ENCODE measurements at regions of chr2 and their contacts with region 1.

Region 1: DNA sequence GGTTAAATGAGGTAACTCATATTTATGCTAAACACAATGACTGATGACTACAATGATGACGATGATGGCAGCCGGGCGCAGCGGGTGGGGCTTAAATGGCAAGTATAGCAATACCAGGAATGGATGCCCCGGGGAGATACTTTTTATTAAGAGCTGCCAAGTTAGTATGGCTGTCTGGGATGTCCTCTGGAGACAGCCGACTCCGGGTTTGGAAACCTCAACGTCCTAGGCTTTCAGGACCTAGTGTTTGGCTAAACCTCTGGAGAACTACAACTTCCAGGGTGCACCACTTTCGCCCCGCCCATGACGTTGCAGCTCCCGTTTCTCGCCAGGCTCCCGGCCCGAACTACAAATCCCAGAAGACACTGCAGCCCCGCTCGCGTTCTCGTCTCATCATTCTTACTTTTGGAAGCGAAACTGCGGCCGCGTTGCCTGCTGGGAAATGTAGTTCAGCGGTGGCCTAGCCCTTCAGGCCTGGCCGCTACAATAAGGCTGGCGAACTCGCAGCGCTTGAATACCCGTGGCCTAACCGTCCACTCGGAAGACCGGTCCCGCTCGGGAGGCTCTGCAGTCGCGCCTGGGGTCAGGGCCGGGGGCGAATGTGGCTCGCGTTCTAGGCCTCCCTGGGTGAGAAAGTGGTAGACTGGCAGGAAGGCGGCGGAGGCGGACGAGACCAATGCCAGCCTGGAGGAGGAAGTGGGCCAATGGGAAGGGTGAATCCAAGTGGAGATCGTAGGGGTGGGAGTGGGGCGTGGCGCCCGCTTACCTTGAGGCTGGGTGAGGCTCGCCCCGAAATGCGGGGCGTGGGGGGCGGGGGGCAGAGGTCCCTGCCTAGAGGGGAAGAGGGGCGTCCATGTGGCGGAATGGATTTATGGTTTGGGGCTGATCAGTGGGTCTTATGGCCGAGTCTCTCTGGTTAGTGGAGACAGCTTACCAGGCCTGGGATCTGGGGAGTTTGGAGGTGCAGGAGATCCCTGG is at the start of gene SMARCAL1:
- DNase-seq: peak; percentile 92
- ATAC-seq: peak; percentile 92
- H3K4me3 ChIP-seq: peak within 1 kb of the TSS; percentile 82
- H3K27ac ChIP-seq: peak within 1 kb of the TSS; percentile 97
- H3K4me1 ChIP-seq: peaks cover 10% of the 10 kb centered on the region
- H3K27me3 ChIP-seq: no peaks in the 10 kb centered on the region
- CTCF ChIP-seq: no peak
- EP300 ChIP-seq: no peak
- POLR2A ChIP-seq: peak; percentile 89
- RAD21 ChIP-seq: no peak
- polyA plus RNA-seq, gene SMARCAL1: 10.8 to 11.4 TPM

Region 2: GRCh38 chr2:216163518-216163917 is 248.8 kb before region 1 on chr2:
- CTCF ChIA-PET with region 1: no interaction called
- POLR2A ChIA-PET with region 1: no interaction called
- RAD21 ChIA-PET with region 1: no interaction called
- SMC1A ChIA-PET with region 1: no interaction called
- in situ Hi-C with region 1: no loop called
- intact Hi-C with region 1: no loop called
- DNase-seq: no peak
- ATAC-seq: no peak
- H3K4me3 ChIP-seq: no peak overlapping the region
- H3K27ac ChIP-seq: no peak overlapping the region
- H3K4me1 ChIP-seq: no peaks in the 10 kb centered on the region
- H3K27me3 ChIP-seq: no peaks in the 10 kb centered on the region
- CTCF ChIP-seq: no peak
- EP300 ChIP-seq: no peak
- POLR2A ChIP-seq: no peak
- RAD21 ChIP-seq: no peak

Region 3: DNA sequence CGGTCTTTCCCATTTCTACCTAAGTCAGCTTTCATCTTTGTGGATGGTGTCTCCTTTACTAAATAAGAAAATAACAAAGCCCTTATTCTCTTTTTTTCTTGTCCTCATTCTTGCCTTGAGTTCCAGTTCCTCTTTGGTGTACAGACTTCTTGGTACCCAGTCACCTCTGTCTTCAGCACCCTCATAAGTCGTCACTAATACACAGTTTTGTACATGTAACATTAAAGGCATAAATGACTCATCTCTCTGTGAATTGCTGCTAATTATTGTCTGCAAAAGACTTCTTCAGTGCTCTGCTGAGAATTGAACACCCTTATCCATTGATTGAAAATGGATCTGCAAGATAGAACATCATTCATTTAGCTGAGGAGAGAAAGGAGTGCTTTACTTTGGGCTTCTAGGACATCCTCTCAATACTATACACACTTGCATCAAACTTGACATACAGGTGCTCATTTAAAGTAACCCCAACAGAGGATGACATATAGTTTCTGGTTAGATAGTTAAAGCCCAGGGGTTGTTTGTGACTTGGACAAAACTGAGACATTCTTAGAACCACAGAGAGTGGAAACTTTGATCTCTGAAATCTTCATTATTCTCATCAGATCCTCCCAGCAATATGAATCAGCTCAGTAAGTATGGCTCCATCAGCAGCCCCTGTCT is 206.1 kb before region 1 on chr2:
- CTCF ChIA-PET with region 1: interaction called, 3 read pairs
- POLR2A ChIA-PET with region 1: no interaction called
- RAD21 ChIA-PET with region 1: interaction called, 3 read pairs
- SMC1A ChIA-PET with region 1: interaction called, 3 read pairs
- in situ Hi-C with region 1: loop called (anchors 10 kb)
- intact Hi-C with region 1: loop called (anchors 10 kb)
- DNase-seq: peak; percentile 54
- ATAC-seq: peak; percentile 90
- H3K4me3 ChIP-seq: no peak overlapping the region
- H3K27ac ChIP-seq: peak overlapping the region; percentile 49
- H3K4me1 ChIP-seq: peaks cover 29% of the 10 kb centered on the region
- H3K27me3 ChIP-seq: no peaks in the 10 kb centered on the region
- CTCF ChIP-seq: no peak
- EP300 ChIP-seq: peak; percentile 64 to 91; a peak in 2 of 4 replicates
- POLR2A ChIP-seq: no peak
- RAD21 ChIP-seq: no peak

Region 4: DNA sequence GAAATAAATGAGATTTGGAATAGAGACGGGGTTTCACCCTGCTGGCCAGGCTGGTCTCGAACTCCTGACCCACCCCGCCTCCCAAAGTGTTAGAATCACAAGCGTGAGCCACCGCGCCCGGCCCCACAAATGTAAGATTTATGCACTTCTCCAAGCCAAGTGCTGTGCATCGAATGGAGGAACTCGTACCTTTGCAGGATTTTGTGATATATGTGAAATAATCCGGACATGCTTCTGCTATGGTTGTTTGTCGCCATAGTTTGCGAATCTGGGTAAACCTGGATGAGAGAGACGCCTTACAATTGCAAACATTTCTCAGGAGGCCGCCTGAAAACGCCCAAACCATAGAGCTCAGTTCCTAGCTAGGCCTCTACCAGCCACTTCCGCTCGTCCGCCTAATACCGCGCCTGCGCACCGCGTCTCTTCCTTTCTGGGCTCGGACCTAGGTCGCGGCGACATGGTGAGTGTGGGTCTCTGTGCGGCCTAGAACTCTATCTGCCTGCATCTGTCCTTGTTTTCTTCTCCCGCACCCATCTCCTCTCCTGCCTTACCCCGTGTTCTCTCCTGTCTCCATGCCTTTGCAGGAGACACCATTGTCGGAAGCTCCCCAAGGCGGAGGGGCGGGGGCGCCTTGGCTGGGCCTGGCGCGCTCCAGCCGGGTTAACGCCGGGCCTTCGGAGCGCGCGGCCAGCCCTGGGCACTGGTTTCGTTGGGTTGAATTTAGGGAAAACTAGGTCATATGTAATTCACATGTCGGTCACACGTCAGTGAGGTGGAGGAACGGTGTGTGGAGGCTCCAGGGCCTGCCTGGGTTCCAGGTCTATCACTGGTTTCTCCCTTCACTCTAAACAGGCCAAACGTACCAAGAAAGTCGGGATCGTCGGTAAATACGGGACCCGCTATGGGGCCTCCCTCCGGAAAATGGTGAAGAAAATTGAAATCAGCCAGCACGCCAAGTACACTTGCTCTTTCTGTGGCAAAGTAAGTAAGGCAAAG is 86.4 kb after region 1 on chr2 and contains the start of gene RPL37A:
- CTCF ChIA-PET with region 1: interaction called, 6 read pairs
- POLR2A ChIA-PET with region 1: interaction called, 16 read pairs
- RAD21 ChIA-PET with region 1: interaction called, 7 read pairs
- SMC1A ChIA-PET with region 1: interaction called, 7 read pairs
- in situ Hi-C with region 1: no loop called
- intact Hi-C with region 1: loop called (anchors 1 kb)
- DNase-seq: peak; percentile 87
- ATAC-seq: peak; percentile 84
- H3K4me3 ChIP-seq: peak within 1 kb of the TSS; percentile 94
- H3K27ac ChIP-seq: peak within 1 kb of the TSS; percentile 88
- H3K4me1 ChIP-seq: peaks cover 23% of the 10 kb centered on the region
- H3K27me3 ChIP-seq: no peaks in the 10 kb centered on the region
- CTCF ChIP-seq: no peak
- EP300 ChIP-seq: no peak
- POLR2A ChIP-seq: peak; percentile 100
- RAD21 ChIP-seq: no peak
- polyA plus RNA-seq, gene RPL37A: 4,917 to 6,297 TPM

Region 5: DNA sequence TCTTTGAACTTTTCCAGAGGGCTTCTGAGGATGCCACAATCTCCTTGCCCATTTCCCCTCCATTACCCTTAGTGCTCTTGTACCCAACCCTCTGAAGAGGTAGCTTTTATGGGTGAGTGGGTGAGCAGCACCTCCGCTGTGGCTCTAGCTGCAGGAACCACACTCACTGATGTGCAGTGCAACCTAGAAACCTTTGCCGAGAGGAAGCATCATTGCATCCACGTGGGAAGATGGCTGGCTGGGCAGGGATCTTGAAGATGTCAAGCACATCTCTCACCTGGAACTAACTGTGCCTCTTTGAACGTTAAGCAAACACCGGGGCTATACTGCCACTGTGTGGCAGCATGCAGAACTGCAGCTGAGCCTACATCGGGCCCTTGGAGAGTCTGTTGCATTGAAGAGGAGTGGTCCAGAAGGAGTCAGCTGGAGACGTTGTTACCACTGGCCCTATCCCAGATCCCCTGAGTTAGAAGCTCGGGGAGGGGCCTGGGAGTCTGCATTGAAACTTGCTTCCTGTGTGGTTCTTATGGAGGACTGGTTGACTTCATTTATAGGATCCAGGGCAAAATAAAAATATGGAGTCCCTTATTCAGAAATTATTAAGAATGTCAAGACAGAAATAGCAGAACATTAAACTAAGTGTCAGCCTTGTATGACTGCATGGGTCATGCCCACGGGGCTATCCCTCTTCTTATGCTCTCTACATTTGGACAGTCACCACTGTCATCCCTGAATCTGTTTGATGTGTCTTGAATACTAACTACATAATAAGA is 254.3 kb after region 1 on chr2:
- CTCF ChIA-PET with region 1: interaction called, 5 read pairs
- POLR2A ChIA-PET with region 1: no interaction called
- RAD21 ChIA-PET with region 1: interaction called, 3 read pairs
- SMC1A ChIA-PET with region 1: interaction called, 3 read pairs
- in situ Hi-C with region 1: no loop called
- intact Hi-C with region 1: loop called (anchors 10 kb)
- DNase-seq: peak; percentile 19
- ATAC-seq: peak; percentile 92
- H3K4me3 ChIP-seq: no peak overlapping the region
- H3K27ac ChIP-seq: no peak overlapping the region
- H3K4me1 ChIP-seq: no peaks in the 10 kb centered on the region
- H3K27me3 ChIP-seq: peaks cover 2 to 5% of the 10 kb centered on the region in 2 experiments
- CTCF ChIP-seq: peak; percentile 98 to 100 (median 98)
- EP300 ChIP-seq: no peak
- POLR2A ChIP-seq: no peak
- RAD21 ChIP-seq: peak; percentile 97